IMR-90 (cell line): ENCODE measurements at regions of chr13 and their contacts with region 1.

Region 1: DNA sequence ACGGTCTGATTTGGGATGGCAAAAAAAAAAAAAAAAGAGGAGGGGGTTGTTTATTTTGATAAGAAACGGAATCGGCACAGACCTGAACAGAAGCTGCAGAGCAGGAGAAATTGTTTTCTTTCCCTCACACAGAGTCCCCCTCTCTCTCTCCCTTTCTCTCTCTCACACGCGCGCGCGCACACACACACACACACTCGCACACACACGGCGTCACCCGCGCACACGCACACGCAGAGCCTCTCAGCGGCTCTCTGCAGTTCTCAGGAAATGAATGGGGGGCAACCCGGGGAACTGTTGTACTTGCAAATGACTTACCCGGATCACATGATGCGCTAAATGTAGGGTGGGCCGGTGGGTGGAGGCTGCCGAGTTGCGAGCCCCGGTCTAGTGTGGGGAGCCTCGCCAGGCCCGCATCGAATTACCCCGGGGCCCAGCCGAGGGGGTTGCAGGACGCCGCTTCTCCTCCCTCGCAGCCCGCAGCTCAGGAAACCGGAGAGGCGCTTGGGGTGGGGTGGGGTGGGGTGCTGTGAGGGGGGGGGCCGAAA is 475 bp downstream of the KLF12 start:
- DNase-seq: peak; percentile 95
- ATAC-seq: peak; percentile 48
- H3K4me3 ChIP-seq: peak overlapping the region; percentile 82
- H3K27ac ChIP-seq: peak overlapping the region; percentile 95
- H3K4me1 ChIP-seq: peaks cover 11% of the 10 kb centered on the region
- H3K27me3 ChIP-seq: no peaks in the 10 kb centered on the region
- CTCF ChIP-seq: no peak
- POLR2A ChIP-seq: peak; percentile 76; the same call in 1 of the 2 replicates
- RAD21 ChIP-seq: no peak

Region 2: DNA sequence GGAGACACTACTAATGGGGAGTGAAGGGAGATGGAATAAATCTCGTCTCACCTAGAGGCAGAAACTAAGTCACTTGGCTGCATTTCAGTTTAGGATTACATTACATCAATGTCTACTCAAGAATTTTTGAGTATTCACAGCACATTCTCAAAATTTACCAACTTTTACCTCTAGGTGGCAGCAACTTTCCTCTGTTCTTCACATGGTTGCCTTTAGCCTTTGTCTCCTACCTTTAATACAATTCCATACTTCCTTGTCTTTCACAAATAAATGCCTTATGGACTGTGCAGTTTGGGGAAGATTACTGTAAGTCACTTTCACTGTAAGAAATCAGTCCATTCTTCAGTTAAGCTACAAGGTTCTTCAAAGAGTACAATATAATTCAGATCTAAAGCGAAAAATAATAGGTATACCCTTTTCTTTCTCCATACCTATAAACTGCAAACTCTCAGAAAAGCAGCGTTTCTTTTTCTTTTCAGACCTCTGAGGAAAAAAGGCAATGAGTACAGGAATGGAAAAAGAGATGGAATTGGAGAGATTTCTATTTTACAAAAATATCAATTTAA is 378.9 kb before region 1 on chr13:
- CTCF ChIA-PET with region 1: no interaction called
- POLR2A ChIA-PET with region 1: no interaction called
- dilution Hi-C with region 1: no loop called
- in situ Hi-C with region 1: no loop called
- intact Hi-C with region 1: loop called (anchors 2 kb)
- DNase-seq: peak; percentile 70
- ATAC-seq: peak; percentile 79
- H3K4me3 ChIP-seq: no peak overlapping the region
- H3K27ac ChIP-seq: no peak overlapping the region
- H3K4me1 ChIP-seq: no peaks in the 10 kb centered on the region
- H3K27me3 ChIP-seq: no peaks in the 10 kb centered on the region
- CTCF ChIP-seq: peak; percentile 75
- POLR2A ChIP-seq: no peak
- RAD21 ChIP-seq: peak; percentile 81

Region 3: DNA sequence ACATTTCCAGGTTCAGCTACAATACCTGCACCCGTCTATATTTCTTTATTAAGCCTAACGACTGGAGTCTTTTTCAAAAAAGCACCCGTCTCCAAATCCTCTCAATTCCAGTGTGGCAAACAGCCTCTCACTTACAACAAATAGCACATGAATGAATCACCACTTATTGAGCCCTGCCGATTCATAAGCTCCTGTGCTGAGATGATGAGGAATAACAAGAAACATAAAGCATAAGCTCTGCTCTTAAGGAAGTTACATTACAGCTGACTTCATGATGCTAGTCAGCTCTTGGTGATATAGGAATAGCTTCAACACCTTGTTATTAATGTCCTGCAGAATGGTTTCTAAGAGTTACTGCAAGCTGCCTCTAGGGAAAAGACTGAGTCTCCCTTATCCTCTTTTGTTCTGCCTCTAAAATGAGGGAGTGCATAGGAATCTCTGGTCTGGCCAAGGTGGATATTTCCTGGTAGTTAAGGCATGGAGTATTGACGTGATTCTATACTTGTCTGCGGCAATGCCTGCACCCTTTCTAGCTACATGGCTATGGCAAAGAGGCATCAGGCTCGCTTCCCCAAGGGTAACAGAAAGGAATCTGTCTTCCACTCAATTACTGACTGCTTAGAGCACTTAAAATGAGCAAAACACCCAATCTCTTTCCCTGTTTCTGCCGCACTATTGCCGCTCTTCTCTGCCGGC is 195.2 kb before region 1 on chr13:
- CTCF ChIA-PET with region 1: no interaction called
- POLR2A ChIA-PET with region 1: no interaction called
- dilution Hi-C with region 1: no loop called
- in situ Hi-C with region 1: no loop called
- intact Hi-C with region 1: loop called (anchors 1 kb)
- DNase-seq: peak; percentile 94
- ATAC-seq: peak; percentile 82
- H3K4me3 ChIP-seq: no peak overlapping the region
- H3K27ac ChIP-seq: peak overlapping the region; percentile 16; the same call in 1 of the 2 replicates
- H3K4me1 ChIP-seq: peaks cover 20% of the 10 kb centered on the region
- H3K27me3 ChIP-seq: no peaks in the 10 kb centered on the region
- CTCF ChIP-seq: no peak
- POLR2A ChIP-seq: no peak
- RAD21 ChIP-seq: peak; percentile 31; the same call in 1 of the 2 replicates

Region 4: DNA sequence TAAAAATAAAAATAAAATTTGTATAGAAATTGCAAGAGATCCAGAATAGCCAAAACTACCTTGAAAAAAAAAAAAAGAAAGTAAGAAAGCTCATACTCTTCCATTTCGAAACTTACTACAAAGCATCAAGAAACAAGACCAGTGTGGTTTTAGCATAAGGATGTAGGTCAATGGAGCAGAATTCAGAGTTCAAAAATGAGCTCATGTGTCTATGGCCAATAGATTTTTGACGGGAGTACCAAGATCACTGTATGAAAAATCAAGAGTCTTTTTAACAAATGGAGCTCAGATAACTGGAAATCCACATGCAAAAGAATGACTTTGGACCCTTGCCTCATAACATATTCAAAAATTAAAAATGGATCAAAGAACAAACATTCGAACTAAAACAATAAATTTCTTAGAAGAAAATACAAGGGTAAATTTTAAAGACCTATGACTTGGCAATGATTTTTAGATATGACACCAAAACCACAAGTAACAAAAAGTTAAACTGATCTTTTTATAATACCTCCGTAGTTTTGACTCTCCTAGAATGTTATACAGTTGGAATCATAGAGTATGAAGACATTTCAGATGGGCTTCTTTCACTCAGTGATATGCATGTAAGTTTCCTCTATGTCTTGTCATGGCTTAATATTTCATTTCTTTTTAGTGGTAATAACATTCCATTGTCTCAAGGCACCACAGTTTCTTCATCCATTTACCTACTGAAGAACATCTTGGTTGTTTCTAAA is 42.7 kb before region 1 on chr13:
- CTCF ChIA-PET with region 1: no interaction called
- POLR2A ChIA-PET with region 1: interaction called, 3 read pairs
- dilution Hi-C with region 1: no loop called
- in situ Hi-C with region 1: no loop called
- intact Hi-C with region 1: loop called (anchors 5 kb)
- DNase-seq: no peak
- ATAC-seq: no peak
- H3K4me3 ChIP-seq: no peak overlapping the region
- H3K27ac ChIP-seq: no peak overlapping the region
- H3K4me1 ChIP-seq: peaks cover 4% of the 10 kb centered on the region; the same call in 1 of the 2 replicates
- H3K27me3 ChIP-seq: no peaks in the 10 kb centered on the region
- CTCF ChIP-seq: no peak
- POLR2A ChIP-seq: no peak
- RAD21 ChIP-seq: no peak

Region 5: DNA sequence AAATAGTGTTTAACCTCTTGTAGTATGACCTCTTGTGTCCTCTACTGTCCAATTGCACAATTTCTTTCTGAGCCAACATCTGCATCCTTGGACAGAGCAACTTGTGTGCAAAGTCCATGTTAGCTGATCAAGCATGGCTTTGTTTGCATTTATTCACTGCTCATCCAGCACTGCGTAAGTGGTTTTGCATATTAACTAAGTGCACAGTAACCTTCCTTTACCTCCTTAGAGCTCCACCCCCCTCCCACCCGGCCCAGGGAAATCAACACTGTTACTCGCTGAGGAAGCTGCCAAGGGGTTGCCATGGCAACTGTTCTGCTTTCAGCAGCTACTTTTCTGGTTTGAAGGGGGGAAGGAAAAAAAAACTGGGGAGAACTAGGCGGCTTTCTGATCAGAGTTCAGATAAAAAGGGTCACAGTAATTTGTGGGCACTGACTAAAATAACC is 154.0 kb after region 1 on chr13:
- CTCF ChIA-PET with region 1: interaction called, 3 read pairs
- POLR2A ChIA-PET with region 1: no interaction called
- dilution Hi-C with region 1: no loop called
- in situ Hi-C with region 1: no loop called
- intact Hi-C with region 1: loop called (anchors 1 kb)
- DNase-seq: peak; percentile 64
- ATAC-seq: peak; percentile 71
- H3K4me3 ChIP-seq: no peak overlapping the region
- H3K27ac ChIP-seq: no peak overlapping the region
- H3K4me1 ChIP-seq: peaks cover 2% of the 10 kb centered on the region
- H3K27me3 ChIP-seq: no peaks in the 10 kb centered on the region
- CTCF ChIP-seq: no peak
- POLR2A ChIP-seq: no peak
- RAD21 ChIP-seq: no peak

Region 6: GRCh38 chr13:74770361-74770760 is 636.6 kb after region 1 on chr13:
- CTCF ChIA-PET with region 1: no interaction called
- POLR2A ChIA-PET with region 1: no interaction called
- dilution Hi-C with region 1: no loop called
- in situ Hi-C with region 1: no loop called
- intact Hi-C with region 1: loop called (anchors 5 kb)
- DNase-seq: peak; percentile 94
- ATAC-seq: peak; percentile 60
- H3K4me3 ChIP-seq: no peak overlapping the region
- H3K27ac ChIP-seq: peak overlapping the region; percentile 37; the same call in 1 of the 2 replicates
- H3K4me1 ChIP-seq: peaks cover 11% of the 10 kb centered on the region
- H3K27me3 ChIP-seq: no peaks in the 10 kb centered on the region
- CTCF ChIP-seq: no peak
- POLR2A ChIP-seq: no peak
- RAD21 ChIP-seq: no peak